ENCODE measurements at regions of chr3 and their contacts with region 1.

Region 1: DNA sequence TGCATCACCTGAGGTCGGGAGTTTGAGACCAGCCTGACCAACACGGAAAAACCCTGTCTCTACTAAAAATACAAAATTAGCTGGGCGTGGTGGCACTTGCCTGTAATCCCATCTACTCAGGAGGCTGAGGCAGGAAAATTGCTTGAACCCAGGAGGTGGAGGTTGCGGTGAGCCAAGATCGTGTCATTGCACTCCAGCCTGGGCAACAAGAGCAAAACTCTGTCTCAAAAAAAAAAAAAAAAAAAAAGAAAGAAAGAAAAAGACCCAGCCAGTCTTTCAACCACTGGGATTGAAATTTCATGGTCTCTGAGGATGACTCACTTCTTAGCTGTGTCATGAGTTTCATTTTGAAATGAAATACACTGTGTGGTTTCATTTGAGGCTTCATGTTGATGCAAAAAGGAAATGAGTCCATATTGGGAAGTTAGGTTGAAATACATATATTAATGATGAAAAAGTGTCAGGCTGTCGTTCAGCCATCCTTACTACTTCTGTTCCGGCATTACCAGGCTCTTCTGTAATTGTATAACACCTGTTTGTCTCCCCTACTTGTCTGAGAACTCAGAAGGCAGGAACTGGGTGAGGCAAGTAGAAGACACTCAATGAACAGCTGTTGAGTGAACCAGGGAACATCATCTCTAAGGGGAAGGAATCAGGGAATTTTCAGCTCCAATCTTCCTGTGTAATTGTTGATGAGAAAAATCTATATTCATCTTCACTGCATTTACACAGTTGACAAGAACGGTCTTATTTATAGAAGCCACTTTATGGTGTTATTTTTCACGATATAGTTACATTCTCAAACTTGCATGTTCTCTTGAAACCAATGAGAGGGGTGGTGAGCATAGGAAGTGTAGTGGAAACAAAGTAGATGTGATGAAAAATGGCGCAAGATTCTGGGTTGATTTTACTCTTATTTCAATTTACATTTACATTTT is 87.4 kb downstream of the NFKBIZ start:
- DNase-seq: peak; percentile 42
- ATAC-seq: peak; percentile 88
- H3K4me3 Mint-ChIP-seq: no peak overlapping the region
- H3K27ac Mint-ChIP-seq: peak overlapping the region; percentile 77
- H3K4me1 Mint-ChIP-seq: peaks cover 27% of the 10 kb centered on the region
- H3K27me3 Mint-ChIP-seq: peaks cover 8% of the 10 kb centered on the region

Region 2: GRCh38 chr3:101081999-101082398 is 854.7 kb before region 1 on chr3:
- CTCF ChIA-PET with region 1: no interaction called
- POLR2A ChIA-PET with region 1: no interaction called
- intact Hi-C with region 1: no loop called
- DNase-seq: no peak
- ATAC-seq: no peak
- H3K4me3 Mint-ChIP-seq: no peak overlapping the region
- H3K27ac Mint-ChIP-seq: no peak overlapping the region
- H3K4me1 Mint-ChIP-seq: no peaks in the 10 kb centered on the region
- H3K27me3 Mint-ChIP-seq: peaks cover 9% of the 10 kb centered on the region

Region 3: DNA sequence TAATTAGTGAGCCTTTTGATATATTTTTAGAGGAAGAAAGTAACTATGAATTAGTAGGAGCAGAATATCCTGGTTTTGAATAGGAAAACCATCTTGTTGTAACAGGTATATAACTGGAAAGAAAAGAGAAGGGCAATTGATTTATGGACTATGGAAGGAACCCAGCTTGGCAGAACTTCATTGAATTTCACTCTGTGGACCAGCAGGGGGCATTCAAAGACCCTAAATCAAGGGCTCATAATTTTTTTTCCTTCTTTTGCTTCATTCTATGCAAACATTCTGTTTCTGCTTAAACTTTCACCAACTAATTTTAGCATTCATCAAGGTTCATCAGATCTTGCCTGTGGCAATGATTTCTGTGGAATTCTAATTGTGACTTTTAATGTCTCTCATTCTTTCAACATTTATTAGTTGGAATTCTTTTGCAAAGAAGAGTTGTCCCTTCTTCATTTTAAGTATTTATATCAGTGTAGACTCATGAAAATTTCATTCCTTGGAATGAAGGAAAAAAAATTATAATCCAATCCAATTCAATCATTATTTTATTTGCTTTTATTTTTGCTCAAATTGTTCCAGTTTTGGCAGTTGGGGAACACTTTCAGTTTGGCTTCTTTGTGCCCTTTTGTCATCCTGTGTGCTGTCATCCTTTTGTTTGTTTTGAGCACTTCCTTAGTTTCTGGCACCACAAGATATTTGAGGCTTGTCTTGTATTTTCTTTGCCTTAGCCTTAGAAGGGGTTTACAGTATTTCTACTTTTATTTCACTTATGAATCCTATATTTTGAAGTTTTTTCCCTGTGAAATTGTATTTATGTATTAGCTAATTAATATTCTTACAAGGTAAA is 127.3 kb before region 1 on chr3:
- CTCF ChIA-PET with region 1: interaction called, 4 read pairs
- POLR2A ChIA-PET with region 1: no interaction called
- intact Hi-C with region 1: loop called (anchors 5 kb)
- DNase-seq: peak; percentile 45
- ATAC-seq: peak; percentile 53
- H3K4me3 Mint-ChIP-seq: no peak overlapping the region
- H3K27ac Mint-ChIP-seq: peak overlapping the region; percentile 53
- H3K4me1 Mint-ChIP-seq: peaks cover 48% of the 10 kb centered on the region
- H3K27me3 Mint-ChIP-seq: no peaks in the 10 kb centered on the region

Region 4: GRCh38 chr3:101890716-101891115 is 46.0 kb before region 1 on chr3:
- CTCF ChIA-PET with region 1: no interaction called
- POLR2A ChIA-PET with region 1: no interaction called
- intact Hi-C with region 1: loop called in 1 of 2 experiments (anchors 2 kb)
- DNase-seq: peak; percentile 33
- ATAC-seq: peak; percentile 96
- H3K4me3 Mint-ChIP-seq: no peak overlapping the region
- H3K27ac Mint-ChIP-seq: no peak overlapping the region
- H3K4me1 Mint-ChIP-seq: peaks cover 3% of the 10 kb centered on the region
- H3K27me3 Mint-ChIP-seq: no peaks in the 10 kb centered on the region

Region 5: GRCh38 chr3:101963902-101964362 is 27.2 kb after region 1 on chr3:
- CTCF ChIA-PET with region 1: interaction called, 3 read pairs
- POLR2A ChIA-PET with region 1: interaction called, 4 read pairs
- intact Hi-C with region 1: loop called in 1 of 2 experiments (anchors 2 kb)
- DNase-seq: peak; percentile 59
- ATAC-seq: peak; percentile 89
- H3K4me3 Mint-ChIP-seq: no peak overlapping the region
- H3K27ac Mint-ChIP-seq: peak overlapping the region; percentile 45
- H3K4me1 Mint-ChIP-seq: peaks cover 27% of the 10 kb centered on the region
- H3K27me3 Mint-ChIP-seq: no peaks in the 10 kb centered on the region

Region 6: GRCh38 chr3:102163036-102163827 is 226.5 kb after region 1 on chr3:
- CTCF ChIA-PET with region 1: interaction called, 3 read pairs
- POLR2A ChIA-PET with region 1: no interaction called
- intact Hi-C with region 1: loop called in 1 of 2 experiments (anchors 1 kb)
- DNase-seq: no peak
- ATAC-seq: peak; percentile 22
- H3K4me3 Mint-ChIP-seq: no peak overlapping the region
- H3K27ac Mint-ChIP-seq: peak overlapping the region; percentile 15
- H3K4me1 Mint-ChIP-seq: peaks cover 23% of the 10 kb centered on the region
- H3K27me3 Mint-ChIP-seq: no peaks in the 10 kb centered on the region

Measured in activated CD4-positive, alpha-beta T cell treated with anti-CD3 and anti-CD28 coated beads for 36 hours (primary cell).